Activated T-helper 1 cell treated with anti-CD3 and anti-CD28 coated beads, Interleukin-12 subunit alpha, Interleukin-12 subunit beta, Interleukin-2, Interleukin-4 antibody, amounts not matched to agents 30 ng/mL and 10 ng/mL and 1 ng/mL, durations not matched to agents 14 hours and 24 hours and 36 hours (primary cell): ENCODE measurements at regions of chr11 and their contacts with region 1.

Region 1: GRCh38 chr11:76380967-76381719 is at the starts of genes GVQW3 and THAP12:
- DNase-seq: peak; percentile 97
- H3K4me3 Mint-ChIP-seq: peak within 1 kb of the TSS; percentile 94
- H3K27ac Mint-ChIP-seq: peak within 1 kb of the TSS; percentile 95
- H3K4me1 Mint-ChIP-seq: peaks cover 44% of the 10 kb centered on the region
- H3K27me3 Mint-ChIP-seq: no peaks in the 10 kb centered on the region
- total RNA-seq, gene GVQW3: 3.9 and 4.7 TPM in 2 replicates
- total RNA-seq, gene THAP12: 78.3 and 81.2 TPM in 2 replicates

Region 2: DNA sequence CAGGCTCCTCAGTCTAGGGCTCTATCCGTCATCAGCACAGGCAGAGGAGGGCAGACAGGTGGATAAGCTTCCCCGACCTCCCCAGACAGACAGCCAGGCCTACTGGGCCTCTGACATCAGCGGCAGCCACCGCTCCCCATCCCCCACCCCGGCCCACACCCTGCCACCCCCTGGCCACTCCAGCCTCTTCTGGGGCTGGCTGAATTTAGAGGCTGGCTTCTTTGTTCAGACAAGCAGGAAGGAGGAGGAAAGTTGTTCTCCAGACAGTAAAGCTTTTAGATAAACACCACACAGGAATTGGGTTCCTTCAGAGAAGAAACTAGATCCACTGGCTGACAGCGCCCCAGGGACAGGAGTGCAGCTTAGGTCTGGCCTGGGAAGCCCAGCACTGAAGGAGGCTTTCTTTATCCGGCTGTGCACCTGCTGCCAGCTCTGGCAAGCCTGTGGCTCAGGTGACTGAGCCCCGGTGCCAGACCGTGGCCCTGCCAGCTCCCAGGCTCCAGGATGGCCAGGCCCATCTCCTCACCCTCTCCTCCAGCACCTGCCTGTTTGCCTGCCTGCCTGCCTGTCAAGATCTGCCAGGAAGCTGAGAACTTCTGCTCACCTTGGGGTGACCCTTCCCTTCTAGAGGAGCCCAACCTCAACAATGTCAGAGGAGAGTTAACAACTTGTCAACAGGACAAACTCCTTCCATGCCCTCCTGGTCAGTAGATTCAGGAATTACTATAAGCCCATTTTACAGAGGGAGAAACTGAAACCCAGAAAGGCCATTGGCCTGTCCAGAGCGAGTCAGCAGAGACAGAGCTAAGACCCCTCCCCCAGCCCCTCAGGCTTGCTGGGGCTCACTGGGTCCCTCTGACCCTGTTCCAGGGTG is 904.2 kb before region 1 on chr11:
- intact Hi-C with region 1: no loop called
- DNase-seq: no peak
- H3K4me3 Mint-ChIP-seq: no peak overlapping the region
- H3K27ac Mint-ChIP-seq: peak overlapping the region; percentile 6
- H3K4me1 Mint-ChIP-seq: peaks cover 17% of the 10 kb centered on the region
- H3K27me3 Mint-ChIP-seq: no peaks in the 10 kb centered on the region

Region 3: DNA sequence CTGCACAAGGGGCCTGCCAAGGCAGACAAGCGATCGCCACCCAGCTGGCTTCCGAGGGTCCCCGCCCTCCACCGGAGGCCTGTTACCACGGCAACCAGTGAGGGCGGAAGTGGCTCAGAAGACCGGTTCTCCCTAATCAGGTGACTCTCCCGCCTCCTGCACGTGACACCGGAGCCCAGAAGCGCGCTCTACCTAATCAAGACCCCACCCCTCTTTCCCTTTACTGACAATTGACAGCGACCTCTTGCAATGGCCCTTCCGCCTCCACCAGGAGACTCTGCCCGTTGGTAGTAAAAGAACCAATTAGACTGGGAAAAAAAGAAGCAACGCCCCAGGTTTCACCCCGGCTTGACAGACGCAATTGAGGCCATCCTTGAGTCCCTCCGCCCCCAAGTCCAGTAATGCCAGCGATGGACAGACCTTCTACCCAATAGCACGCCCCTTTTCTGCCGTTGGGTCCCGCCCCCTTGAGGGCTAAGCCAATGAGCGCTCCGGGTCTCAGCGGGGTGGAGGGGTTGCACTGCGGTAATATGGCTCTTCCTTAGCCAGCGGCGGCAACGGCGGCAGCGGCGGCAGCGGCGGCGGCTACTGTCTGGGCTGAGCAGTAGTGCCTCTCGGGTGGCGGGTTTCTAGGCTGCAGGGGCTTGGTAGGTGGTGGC is 566.3 kb before region 1 on chr11 and contains the start of gene UVRAG:
- intact Hi-C with region 1: loop called (anchors 2 kb)
- DNase-seq: peak; percentile 97
- H3K4me3 Mint-ChIP-seq: peak within 1 kb of the TSS; percentile 97
- H3K27ac Mint-ChIP-seq: peak within 1 kb of the TSS; percentile 93
- H3K4me1 Mint-ChIP-seq: peaks cover 24% of the 10 kb centered on the region
- H3K27me3 Mint-ChIP-seq: peaks cover 4% of the 10 kb centered on the region
- total RNA-seq, gene UVRAG: 18.6 and 19.5 TPM in 2 replicates

Region 4: GRCh38 chr11:76235233-76236091 is 145.7 kb before region 1 on chr11:
- intact Hi-C with region 1: loop called (anchors 1 kb)
- DNase-seq: peak; percentile 85
- H3K4me3 Mint-ChIP-seq: peak overlapping the region; percentile 92
- H3K27ac Mint-ChIP-seq: peak overlapping the region; percentile 84
- H3K4me1 Mint-ChIP-seq: peaks cover 50% of the 10 kb centered on the region
- H3K27me3 Mint-ChIP-seq: peaks cover 30% of the 10 kb centered on the region

Region 5: GRCh38 chr11:76424379-76424778 is 43.2 kb after region 1 on chr11:
- intact Hi-C with region 1: loop called (anchors 1 kb)
- DNase-seq: no peak
- H3K4me3 Mint-ChIP-seq: no peak overlapping the region
- H3K27ac Mint-ChIP-seq: peak overlapping the region; percentile 8
- H3K4me1 Mint-ChIP-seq: peaks cover 23% of the 10 kb centered on the region
- H3K27me3 Mint-ChIP-seq: peaks cover 5% of the 10 kb centered on the region

Region 6: DNA sequence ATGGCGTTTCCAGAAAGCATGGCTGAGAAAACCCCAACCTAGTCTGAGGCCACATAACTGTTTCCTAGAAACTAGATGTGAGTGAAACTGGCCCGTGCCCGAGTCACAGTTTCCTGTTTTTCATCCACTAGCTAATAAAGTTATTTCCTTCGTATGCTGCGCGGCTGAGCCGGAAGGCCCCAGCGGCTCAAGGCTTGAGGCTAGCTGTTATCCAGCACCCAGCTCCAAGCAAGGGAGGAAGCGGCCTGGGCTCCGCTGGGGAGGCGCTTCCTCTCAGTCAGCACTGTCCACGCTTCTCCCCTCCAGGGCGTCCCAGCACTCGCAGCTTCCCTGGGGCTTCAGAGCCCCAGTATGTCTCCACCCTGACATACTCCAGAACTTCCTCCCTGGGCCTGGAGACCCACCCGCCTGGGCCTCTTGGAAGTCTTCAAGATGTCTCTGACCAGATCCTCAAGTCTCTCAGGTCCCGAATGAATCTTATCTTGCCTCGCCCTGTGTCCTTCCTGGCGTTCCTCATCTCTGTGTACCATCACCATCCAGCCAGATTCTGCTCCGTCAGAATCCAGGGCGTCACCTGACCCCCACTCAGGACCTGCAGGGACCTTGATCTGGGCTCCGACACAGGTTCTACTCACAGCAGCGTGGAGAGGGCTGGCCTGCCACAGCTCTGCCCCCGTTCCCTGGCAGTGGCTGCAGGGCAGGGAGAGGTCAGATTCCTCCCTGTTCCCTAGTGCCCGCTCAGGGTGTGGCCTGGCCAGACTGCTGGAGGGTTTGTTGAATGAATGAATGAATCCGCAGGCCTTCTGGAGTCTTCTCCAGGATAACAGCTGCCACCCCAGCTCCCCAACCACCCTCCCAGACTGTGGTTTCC is 207.5 kb after region 1 on chr11:
- intact Hi-C with region 1: loop called (anchors 5 kb)
- DNase-seq: peak; percentile 43
- H3K4me3 Mint-ChIP-seq: peak overlapping the region; percentile 5
- H3K27ac Mint-ChIP-seq: peak overlapping the region; percentile 83
- H3K4me1 Mint-ChIP-seq: peaks cover 73% of the 10 kb centered on the region
- H3K27me3 Mint-ChIP-seq: peaks cover 2% of the 10 kb centered on the region

Region 7: DNA sequence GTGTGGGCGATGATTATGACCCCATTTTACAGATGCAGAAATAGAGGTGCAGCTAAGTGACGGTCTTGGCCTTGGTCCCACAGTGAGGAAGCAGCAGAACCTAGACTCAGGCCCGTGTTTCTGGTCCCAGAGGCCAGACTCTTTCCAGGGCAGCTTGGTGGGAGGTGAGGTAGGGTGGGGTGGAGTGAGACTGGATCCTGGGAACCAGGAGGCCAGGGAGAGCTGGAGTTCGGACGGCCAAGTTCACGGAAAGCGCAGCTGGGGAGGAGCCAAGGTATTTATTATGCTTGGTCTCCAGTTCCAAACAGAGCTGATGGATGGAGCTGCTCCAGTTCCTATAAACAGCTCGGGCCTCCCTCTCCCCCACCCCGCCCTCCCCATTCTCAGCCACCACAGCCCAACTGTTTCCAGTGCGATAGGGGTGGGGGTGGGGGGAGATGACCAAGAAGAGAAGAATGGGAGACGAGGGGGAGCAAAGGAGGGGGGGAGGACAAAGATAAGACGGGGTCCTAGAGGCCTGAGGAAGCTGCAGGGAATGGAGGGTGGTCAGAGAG is 273.2 kb after region 1 on chr11:
- intact Hi-C with region 1: no loop called
- DNase-seq: no peak
- H3K4me3 Mint-ChIP-seq: no peak overlapping the region
- H3K27ac Mint-ChIP-seq: no peak overlapping the region
- H3K4me1 Mint-ChIP-seq: no peaks in the 10 kb centered on the region
- H3K27me3 Mint-ChIP-seq: peaks cover 15% of the 10 kb centered on the region

Region 8: DNA sequence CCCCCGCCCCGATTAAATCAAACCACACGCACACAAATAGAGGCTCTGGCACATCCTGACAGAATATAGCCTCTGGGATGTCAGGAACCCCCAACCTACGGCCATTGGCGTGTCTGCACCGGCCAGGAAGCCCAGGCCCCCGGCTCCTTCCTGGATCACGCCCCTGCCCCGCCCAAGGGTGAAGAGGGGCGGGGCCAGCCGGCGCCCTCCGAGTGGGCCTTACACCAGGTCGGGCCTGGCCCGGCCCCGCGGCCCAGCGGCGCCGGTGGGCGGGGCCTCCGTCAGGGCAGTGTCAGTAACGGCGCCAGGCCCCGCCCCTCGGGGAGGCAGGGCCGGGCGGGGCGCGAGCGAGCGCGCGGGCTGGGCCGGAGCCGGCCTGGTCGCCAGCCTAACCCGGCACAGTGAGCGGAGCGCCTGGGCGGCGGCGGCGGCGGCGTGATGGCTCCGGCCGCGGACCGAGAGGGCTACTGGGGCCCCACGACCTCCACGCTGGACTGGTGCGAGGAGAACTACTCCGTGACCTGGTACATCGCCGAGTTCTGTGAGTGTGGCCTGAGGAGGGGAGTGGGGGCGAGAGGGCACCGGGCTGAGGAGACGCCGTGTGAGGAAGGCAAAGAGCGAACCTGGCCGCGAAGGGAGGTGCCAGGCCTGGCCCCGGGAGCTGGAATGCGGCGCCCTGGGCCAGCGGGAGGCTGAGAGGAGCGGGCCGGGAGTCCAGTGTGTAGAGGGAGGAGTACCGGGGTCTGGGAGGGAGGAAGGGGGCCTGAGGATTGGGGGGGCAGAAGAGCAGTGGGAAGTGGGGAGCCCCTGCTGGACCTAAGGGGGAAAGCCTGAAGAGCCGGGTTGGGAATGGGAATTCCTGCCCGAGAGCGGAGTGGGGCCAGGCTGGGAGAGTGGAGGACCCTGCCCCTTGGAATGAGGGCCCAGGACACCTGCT is 479.7 kb after region 1 on chr11 and contains the start of gene ACER3:
- intact Hi-C with region 1: loop called (anchors 2 kb)
- DNase-seq: peak; percentile 87
- H3K4me3 Mint-ChIP-seq: peak within 1 kb of the TSS; percentile 90
- H3K27ac Mint-ChIP-seq: peak within 1 kb of the TSS; percentile 73
- H3K4me1 Mint-ChIP-seq: peaks cover 33% of the 10 kb centered on the region
- H3K27me3 Mint-ChIP-seq: peaks cover 2% of the 10 kb centered on the region
- total RNA-seq, gene ACER3: 9.9 and 12.2 TPM in 2 replicates